Mammary epithelial cell (primary cell): ENCODE measurements at regions of chr2 and their contacts with region 1.

Region 1: DNA sequence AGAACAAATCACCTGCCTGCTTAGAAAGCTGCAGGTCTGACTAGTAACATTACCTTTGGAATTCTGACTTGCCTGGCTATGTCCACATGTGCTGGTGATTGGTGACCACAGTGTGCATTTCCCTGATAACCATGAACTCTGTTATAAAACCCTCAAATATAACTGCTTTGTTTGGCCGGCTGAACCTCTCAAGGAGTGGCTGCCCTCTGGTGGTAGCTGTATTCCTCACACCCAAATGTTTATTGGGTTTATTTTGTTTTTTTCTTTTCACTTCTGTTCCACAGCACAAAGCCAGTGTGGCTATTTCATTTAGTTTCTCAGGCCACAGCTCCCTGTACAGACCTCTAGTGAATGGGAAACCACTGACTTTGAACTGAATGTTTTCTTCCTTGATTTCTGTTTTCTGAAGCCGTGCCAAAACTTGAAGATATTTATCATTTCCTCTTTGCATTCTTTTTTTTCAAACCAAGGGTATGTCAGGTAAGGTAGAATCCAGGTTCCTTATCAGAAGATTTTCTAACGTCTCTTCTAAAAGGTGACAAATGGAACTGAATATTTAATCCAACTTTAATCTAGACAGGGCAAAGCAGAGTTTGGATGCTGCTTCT is 549.0 kb upstream of the VRK2 start:
- DNase-seq: peak; percentile 24
- H3K4me3 ChIP-seq: no peak overlapping the region
- H3K27ac ChIP-seq: no peak overlapping the region
- H3K4me1 ChIP-seq: no peaks in the 10 kb centered on the region
- H3K27me3 ChIP-seq: no peaks in the 10 kb centered on the region
- CTCF ChIP-seq: peak; percentile 80 to 91

Region 2: DNA sequence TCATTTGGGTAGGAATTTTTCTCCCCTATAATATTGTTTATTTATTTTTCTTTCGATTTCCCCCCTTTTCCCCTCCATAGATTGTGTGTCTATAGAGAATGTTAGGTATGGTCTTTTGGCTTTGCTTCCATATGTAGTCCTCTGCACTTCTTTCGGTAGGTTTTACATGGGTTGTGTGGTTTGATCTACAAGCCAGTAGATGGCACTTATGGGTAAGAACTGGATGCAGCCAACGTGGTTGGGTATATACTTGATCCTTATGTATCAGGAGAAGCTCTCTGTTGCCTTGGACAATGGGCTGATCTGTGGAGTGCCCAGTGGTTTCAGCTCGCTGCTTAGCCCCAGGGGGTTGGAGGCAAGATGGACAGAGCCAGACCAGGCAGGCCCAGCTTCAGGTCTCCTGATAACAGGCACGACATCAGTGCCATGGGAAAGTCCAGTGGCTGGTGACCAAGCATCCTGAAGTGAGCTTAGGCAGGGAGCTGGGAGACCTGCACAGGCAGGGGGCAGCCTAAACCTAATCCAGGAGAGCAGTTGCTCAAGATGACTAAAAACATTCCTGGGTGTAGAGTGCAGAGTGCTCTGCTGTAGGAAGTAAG is 825.5 kb before region 1 on chr2:
- CTCF ChIA-PET with region 1: no interaction called
- dilution Hi-C with region 1: no loop called
- in situ Hi-C with region 1: no loop called
- intact Hi-C with region 1: loop called (anchors 1 kb)
- DNase-seq: peak; percentile 4
- H3K4me3 ChIP-seq: no peak overlapping the region
- H3K27ac ChIP-seq: no peak overlapping the region
- H3K4me1 ChIP-seq: no peaks in the 10 kb centered on the region
- H3K27me3 ChIP-seq: no peaks in the 10 kb centered on the region
- CTCF ChIP-seq: peak in 1 of 2 donors; percentile 31

Region 3: DNA sequence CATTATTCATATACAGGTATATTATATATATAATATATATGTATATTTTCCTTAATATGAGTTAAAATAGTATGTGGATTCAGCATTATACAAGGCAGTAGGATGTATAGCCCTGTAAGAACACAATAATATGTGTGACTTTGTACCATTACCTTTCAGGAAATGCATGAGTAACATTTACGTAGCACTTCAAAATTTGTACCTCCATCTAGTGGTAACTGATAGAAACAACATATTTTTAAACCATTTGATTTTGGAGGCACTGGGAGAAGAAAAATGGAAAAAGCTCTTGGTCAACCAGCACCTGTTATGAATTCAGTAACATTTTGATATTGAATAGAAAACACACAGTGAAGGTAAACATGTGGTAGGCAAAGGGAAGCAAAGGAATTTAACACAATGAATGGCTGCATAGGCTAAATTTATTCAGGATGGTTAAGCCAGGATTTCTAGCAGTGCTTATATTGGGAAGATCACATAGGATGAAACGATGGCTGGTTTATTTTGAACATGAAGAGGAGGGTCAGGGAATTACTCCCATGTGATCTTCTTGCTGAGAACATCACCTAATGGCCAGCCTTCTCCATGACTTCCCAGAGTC is 748.3 kb before region 1 on chr2:
- CTCF ChIA-PET with region 1: no interaction called
- dilution Hi-C with region 1: no loop called
- in situ Hi-C with region 1: no loop called
- intact Hi-C with region 1: loop called (anchors 10 kb)
- DNase-seq: peak; percentile 28
- H3K4me3 ChIP-seq: no peak overlapping the region
- H3K27ac ChIP-seq: no peak overlapping the region
- H3K4me1 ChIP-seq: no peaks in the 10 kb centered on the region
- H3K27me3 ChIP-seq: no peaks in the 10 kb centered on the region
- CTCF ChIP-seq: peak; percentile 56 to 60

Region 4: DNA sequence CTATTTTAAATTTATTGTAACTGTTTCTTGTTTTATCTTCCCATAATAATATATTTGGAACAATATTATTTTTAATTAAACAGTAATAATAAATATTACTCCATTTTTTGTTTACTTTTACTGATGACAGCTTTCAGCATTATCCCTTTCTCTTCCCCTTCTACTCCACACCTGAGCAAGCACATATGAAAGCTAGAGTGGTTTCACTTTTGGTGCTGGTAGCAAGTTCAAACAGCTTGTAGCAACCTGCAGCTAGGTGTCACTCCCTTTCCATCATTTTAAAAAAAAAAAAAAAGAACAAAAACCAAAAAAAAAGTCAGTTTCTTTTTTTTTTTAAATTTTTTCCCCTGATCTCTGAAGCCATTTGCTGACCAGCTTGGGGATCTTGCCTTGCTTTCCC is 512.0 kb before region 1 on chr2:
- CTCF ChIA-PET with region 1: no interaction called
- dilution Hi-C with region 1: no loop called
- in situ Hi-C with region 1: no loop called
- intact Hi-C with region 1: loop called (anchors 5 kb)
- DNase-seq: no peak
- H3K4me3 ChIP-seq: no peak overlapping the region
- H3K27ac ChIP-seq: no peak overlapping the region
- H3K4me1 ChIP-seq: no peaks in the 10 kb centered on the region
- H3K27me3 ChIP-seq: no peaks in the 10 kb centered on the region
- CTCF ChIP-seq: peak in 1 of 2 donors; percentile 18

Region 5: GRCh38 chr2:57376985-57377384 is 120.6 kb before region 1 on chr2:
- CTCF ChIA-PET with region 1: interaction called, 3 read pairs
- dilution Hi-C with region 1: no loop called
- in situ Hi-C with region 1: no loop called
- intact Hi-C with region 1: loop called (anchors 1 kb)
- DNase-seq: no peak
- H3K4me3 ChIP-seq: no peak overlapping the region
- H3K27ac ChIP-seq: no peak overlapping the region
- H3K4me1 ChIP-seq: peaks cover 16% of the 10 kb centered on the region
- H3K27me3 ChIP-seq: no peaks in the 10 kb centered on the region
- CTCF ChIP-seq: peak; percentile 17 to 35

Region 6: DNA sequence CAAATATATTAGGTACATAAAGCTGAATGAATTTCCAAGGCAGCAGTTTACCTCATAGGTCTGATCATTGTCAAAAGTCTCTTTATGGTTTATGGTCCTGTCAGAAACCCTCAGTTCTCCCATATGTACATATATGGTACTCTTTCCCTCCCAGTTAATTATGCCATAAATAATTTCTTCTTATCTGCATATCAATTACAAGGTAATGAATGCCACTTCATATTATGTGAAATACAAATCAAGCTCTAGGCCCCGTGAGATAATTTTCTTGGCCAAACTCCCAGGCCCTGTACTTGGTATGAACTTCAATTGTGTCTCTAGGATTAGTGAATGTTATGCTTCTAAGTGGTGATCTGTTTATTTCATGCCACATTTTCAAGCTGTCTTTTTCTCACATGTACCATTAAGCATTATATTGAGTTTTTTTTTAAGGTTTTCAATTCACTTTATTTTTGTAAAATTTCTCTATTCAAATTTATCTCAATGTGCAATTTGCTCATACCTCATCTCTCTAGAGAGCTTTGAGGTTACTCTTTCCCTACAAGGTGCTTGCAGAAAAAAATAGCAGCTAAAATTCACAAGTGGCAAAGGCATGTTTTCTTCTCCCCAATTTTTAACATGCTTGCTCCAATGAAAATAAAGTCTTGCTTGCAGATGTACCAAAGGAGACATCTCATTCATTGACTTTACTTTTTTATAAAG is 118.4 kb after region 1 on chr2:
- CTCF ChIA-PET with region 1: no interaction called
- dilution Hi-C with region 1: no loop called
- in situ Hi-C with region 1: no loop called
- intact Hi-C with region 1: no loop called
- DNase-seq: no peak
- H3K4me3 ChIP-seq: no peak overlapping the region
- H3K27ac ChIP-seq: no peak overlapping the region
- H3K4me1 ChIP-seq: no peaks in the 10 kb centered on the region
- H3K27me3 ChIP-seq: no peaks in the 10 kb centered on the region
- CTCF ChIP-seq: no peak

Region 7: DNA sequence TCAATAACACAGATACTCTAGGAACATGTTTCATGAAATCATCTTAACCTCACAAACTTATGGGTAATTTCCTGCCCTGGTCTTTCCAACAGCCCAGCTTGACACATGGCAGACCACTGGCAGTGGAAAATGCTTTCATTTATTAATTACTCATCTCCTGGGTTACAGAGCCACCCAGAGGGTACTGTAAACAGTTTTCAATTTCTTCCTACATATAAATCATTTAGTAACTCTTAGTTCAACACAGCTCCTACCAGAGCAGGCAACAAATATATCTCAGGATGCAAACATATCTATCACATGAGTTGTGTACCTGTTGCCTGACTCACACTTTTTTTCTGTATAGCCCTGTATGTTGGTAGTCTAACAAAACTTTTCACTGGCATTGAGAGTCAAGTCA is 449.8 kb after region 1 on chr2:
- CTCF ChIA-PET with region 1: no interaction called
- dilution Hi-C with region 1: no loop called
- in situ Hi-C with region 1: no loop called
- intact Hi-C with region 1: no loop called
- DNase-seq: no peak
- H3K4me3 ChIP-seq: no peak overlapping the region
- H3K27ac ChIP-seq: no peak overlapping the region
- H3K4me1 ChIP-seq: no peaks in the 10 kb centered on the region
- H3K27me3 ChIP-seq: no peaks in the 10 kb centered on the region
- CTCF ChIP-seq: no peak